ENCODE measurements at regions of chr3 and their contacts with region 1.

Region 1: GRCh38 chr3:53709860-53710674 is 136.2 kb downstream of the CHDH start:
- DNase-seq: peak; percentile 59
- H3K4me3 ChIP-seq: no peak overlapping the region
- H3K27ac ChIP-seq: no peak overlapping the region
- H3K4me1 ChIP-seq: no peaks in the 10 kb centered on the region
- H3K27me3 ChIP-seq: no peaks in the 10 kb centered on the region
- CTCF ChIP-seq: peak; percentile 50 to 89 (median 74)
- POLR2A ChIP-seq: no peak

Region 2: GRCh38 chr3:52939600-52939999 is 770.5 kb before region 1 on chr3:
- intact Hi-C with region 1: no loop called
- DNase-seq: no peak
- H3K4me3 ChIP-seq: no peak overlapping the region
- H3K27ac ChIP-seq: no peak overlapping the region
- H3K4me1 ChIP-seq: no peaks in the 10 kb centered on the region
- H3K27me3 ChIP-seq: no peaks in the 10 kb centered on the region
- CTCF ChIP-seq: no peak
- POLR2A ChIP-seq: no peak

Region 3: GRCh38 chr3:53219895-53220483 is 490.1 kb before region 1 on chr3:
- intact Hi-C with region 1: loop called (anchors 5 kb)
- DNase-seq: peak; percentile 72
- H3K4me3 ChIP-seq: no peak overlapping the region
- H3K27ac ChIP-seq: no peak overlapping the region
- H3K4me1 ChIP-seq: no peaks in the 10 kb centered on the region
- H3K27me3 ChIP-seq: no peaks in the 10 kb centered on the region
- CTCF ChIP-seq: peak; percentile 42 to 88 (median 75)
- POLR2A ChIP-seq: no peak

Region 4: GRCh38 chr3:53295410-53295809 is 414.7 kb before region 1 on chr3:
- intact Hi-C with region 1: loop called (anchors 5 kb)
- DNase-seq: no peak
- H3K4me3 ChIP-seq: no peak overlapping the region
- H3K27ac ChIP-seq: no peak overlapping the region
- H3K4me1 ChIP-seq: no peaks in the 10 kb centered on the region
- H3K27me3 ChIP-seq: no peaks in the 10 kb centered on the region
- CTCF ChIP-seq: no peak
- POLR2A ChIP-seq: no peak

Region 5: GRCh38 chr3:53375019-53375418 is 335.0 kb before region 1 on chr3:
- intact Hi-C with region 1: loop called (anchors 5 kb)
- DNase-seq: peak; percentile 46
- H3K4me3 ChIP-seq: no peak overlapping the region
- H3K27ac ChIP-seq: no peak overlapping the region
- H3K4me1 ChIP-seq: no peaks in the 10 kb centered on the region
- H3K27me3 ChIP-seq: no peaks in the 10 kb centered on the region
- CTCF ChIP-seq: peak; percentile 26 to 78 (median 68)
- POLR2A ChIP-seq: no peak

Region 6: DNA sequence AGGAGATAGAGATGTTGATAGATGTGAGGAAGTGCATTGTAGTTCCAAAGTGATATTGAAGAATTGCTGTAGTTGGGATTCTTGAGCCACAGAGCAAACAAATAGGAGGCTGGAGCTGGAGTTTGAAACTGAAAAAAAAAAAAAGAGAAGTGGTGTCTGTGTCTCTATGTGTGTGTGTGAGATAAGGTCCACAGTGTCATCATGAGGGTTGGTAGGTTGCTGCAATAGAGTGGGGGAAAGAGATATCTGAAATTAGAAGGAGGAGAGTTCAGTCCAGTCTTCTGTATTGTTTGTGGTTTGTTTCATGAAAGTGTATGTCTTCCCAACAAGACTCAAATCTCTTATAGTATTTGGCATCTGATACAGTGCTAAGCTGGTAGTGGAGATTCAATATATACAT is 253.0 kb before region 1 on chr3:
- intact Hi-C with region 1: no loop called
- DNase-seq: no peak
- H3K4me3 ChIP-seq: no peak overlapping the region
- H3K27ac ChIP-seq: no peak overlapping the region
- H3K4me1 ChIP-seq: no peaks in the 10 kb centered on the region
- H3K27me3 ChIP-seq: no peaks in the 10 kb centered on the region
- CTCF ChIP-seq: no peak
- POLR2A ChIP-seq: no peak

Region 7: DNA sequence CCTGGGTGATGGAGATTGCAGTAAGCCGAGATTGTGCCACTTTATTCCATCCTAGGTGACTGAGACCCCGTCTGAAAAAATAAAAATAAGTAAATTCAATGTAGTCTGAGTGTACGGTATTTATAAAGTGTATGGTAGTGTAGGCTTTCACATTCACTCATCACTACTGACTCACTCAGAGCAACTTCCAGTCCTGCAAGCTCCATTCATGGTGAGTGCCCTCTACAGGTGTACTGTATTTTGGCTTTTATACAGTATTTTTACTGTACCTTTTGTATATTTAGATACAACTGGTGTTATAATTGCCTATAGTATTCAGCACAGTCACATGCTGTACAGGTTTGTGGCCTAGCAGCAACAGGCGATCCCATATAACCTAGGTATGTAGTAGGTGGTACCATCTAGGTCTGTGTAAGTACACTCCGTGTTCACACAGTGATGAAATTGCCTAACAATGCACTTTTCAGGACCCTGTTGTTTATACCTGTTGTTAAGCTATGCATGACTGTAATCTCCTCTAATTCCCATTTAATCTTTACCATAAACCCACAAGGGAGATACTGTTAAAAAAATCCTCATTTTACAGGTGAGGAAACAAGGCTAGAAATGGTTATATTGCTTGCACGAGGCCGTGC is 196.4 kb before region 1 on chr3:
- intact Hi-C with region 1: no loop called
- DNase-seq: no peak
- H3K4me3 ChIP-seq: no peak overlapping the region
- H3K27ac ChIP-seq: no peak overlapping the region
- H3K4me1 ChIP-seq: no peaks in the 10 kb centered on the region
- H3K27me3 ChIP-seq: no peaks in the 10 kb centered on the region
- CTCF ChIP-seq: no peak
- POLR2A ChIP-seq: no peak